Head of caudate nucleus (tissue), 42 donors: ENCODE measurements at regions of chr4 and their contacts with region 1.

Region 1: GRCh38 chr4:125314676-125315575 is at the start of gene FAT4:
- DNase-seq: peak; percentile 81 to 98 (median 93)

Region 2: DNA sequence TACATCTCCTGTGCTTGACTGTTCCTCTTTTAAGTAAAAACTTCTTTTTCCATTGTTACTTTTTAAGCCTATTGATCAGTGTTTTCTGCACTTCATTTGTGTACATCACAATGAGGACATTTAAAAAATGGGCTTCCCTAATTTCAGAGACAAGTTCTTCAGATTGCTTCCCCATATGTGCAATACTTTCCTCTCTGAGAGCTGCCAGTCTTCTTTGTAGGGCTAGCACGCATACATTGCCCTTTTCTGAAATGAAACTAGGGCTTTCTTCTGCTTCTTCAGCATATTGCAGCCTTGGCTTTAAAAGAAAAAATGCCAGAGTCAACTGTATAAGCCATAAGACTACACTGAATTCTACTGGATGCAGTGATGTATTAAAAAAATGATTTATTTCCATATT is 37.6 kb after region 1 on chr4:
- intact Hi-C with region 1: loop called (anchors 5 kb)
- DNase-seq: peak in 2 of 42 donors; percentile 10 to 35

Region 3: DNA sequence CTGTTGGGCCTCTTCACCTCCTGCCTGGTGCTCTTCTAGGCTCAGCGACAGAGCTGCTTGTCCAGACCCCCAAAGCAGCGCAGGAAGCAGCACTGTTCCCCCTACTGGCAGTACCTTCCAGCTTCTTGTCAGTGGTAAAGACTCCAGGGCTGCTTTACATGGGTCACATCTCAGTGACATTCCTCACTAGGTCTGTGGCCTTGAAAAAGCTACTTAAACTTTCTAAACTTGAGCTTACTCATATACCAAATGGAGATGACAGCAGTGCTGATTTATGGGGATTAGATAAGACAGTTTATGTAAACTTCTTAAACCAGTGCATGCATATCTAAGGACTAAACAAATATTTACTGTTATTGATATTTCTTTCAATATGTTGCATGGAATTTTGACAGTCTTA is 117.2 kb after region 1 on chr4:
- intact Hi-C with region 1: loop called (anchors 5 kb)
- DNase-seq: peak in 34 of 42 donors; percentile 3 to 78 (median 38)

Region 4: DNA sequence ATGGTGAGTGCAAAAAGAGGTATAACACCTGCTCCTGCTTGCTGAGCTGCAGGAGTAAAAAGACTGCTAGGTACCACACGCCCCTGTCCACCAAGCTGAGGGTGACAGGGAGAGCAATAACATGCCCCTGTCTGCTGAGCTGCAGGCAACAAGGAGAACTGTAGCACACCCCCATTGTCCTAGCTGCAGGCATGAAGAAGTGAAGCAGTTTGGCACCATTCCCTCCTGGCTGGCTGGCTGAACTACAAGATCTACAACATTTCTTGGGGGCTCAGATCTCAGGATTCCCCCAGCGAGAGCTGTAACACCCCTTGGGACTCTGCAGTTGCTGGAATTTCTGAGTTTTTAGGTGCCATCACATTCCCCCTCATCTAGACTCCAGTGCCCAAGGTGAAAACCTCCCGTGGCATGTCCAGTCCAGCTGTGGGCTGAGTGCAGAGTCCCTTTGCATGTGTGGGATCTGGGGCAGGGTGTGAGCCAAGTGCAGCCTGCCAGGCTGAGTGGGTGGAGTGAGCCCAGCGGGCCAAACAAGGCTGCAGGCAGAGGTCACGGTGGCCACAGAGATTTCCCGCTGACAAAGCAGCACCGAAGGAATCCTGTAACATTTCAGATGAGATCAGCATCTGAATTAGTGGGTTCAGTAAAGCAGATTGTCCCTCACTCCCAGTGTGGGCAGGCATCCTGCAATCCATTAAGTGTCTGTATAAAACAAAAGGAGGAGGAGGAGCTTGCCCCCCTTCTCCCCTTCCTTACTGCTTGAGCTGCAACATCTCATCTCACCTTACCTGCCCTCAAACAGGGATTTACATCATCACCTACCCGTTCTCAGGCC is 324.1 kb after region 1 on chr4:
- intact Hi-C with region 1: no loop called
- DNase-seq: peak in 1 of 42 donors; percentile 3

Region 5: GRCh38 chr4:125750828-125751466 is 436.0 kb after region 1 on chr4:
- intact Hi-C with region 1: loop called (anchors 5 kb)
- DNase-seq: peak in 18 of 42 donors; percentile 12 to 66 (median 32)